Heart left ventricle (tissue), 16 donors: ENCODE measurements at regions of chr2 and their contacts with region 1.

Region 1: DNA sequence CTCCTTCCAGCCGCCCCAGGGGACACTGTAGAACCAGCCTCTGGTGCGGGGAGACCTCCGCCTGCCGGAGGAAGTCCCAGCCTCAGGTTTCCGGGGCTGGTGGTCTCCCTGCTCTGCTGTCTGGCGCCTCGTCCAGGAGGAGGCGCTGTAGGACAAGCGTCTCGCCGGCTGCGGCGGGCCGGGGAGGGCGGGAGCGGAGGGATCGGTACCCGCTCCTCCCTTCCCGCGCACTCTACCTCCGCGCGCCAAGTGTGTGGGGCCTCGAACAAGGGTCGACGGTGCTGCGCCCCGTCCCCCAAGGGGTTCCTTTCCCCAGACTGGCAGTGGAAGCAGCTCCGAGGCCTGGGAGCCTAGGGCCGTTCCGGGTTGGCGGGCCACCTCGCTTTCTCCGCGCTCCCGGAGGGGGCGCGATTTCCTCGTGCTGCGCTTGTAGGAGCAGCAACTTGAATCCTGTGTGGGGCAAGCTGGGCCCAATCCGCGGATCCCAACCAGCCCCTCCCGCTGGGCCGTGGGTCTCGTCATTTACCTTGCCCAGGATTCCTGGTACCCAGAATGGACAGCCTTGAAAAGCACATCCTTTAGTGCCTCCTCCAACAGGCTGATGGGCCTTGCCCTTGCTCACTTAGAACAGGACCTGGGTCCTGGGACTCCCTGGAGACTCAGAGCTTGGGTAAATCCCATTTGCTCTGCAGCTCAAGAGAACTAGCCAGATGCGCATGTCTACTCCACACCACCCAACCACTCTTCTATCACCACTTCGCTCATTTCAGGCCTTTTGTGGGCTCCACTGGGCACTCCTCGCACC is 10.6 kb upstream of the HOXD4 start:
- DNase-seq: peak; percentile 64 to 85 (median 70)
- ATAC-seq: peak; percentile 80 to 97 (median 94)
- H3K4me3 ChIP-seq: peak overlapping the region; percentile 1 to 69 (median 52)
- H3K27ac ChIP-seq: peak overlapping the region in 5 of 12 donors; percentile 32 to 68 (median 56)
- H3K4me1 ChIP-seq: peaks cover 0 to 30% (median 14%) of the 10 kb centered on the region in 12 donors
- H3K27me3 ChIP-seq: peaks cover 31 to 97% (median 66%) of the 10 kb centered on the region in 9 donors
- CTCF ChIP-seq: peak; percentile 68 to 98 (median 92)
- POLR2A ChIP-seq: no peak

Region 2: GRCh38 chr2:176178038-176178756 is 37.5 kb after region 1 on chr2:
- intact Hi-C with region 1: loop called in 1 of 10 experiments (anchors 5 kb)
- DNase-seq: peak in 1 of 5 donors; percentile 66
- ATAC-seq: peak in 3 of 4 donors; percentile 29 to 59 (median 48)
- H3K4me3 ChIP-seq: peak overlapping the region in 11 of 12 donors; percentile 5 to 54 (median 40)
- H3K27ac ChIP-seq: peak overlapping the region in 4 of 12 donors; percentile 8 to 83 (median 69)
- H3K4me1 ChIP-seq: peaks cover 0 to 19% (median 0%) of the 10 kb centered on the region in 12 donors
- H3K27me3 ChIP-seq: peaks cover 35 to 100% (median 70%) of the 10 kb centered on the region in 9 donors
- CTCF ChIP-seq: no peak
- POLR2A ChIP-seq: no peak

Region 3: GRCh38 chr2:176638167-176639015 is 497.7 kb after region 1 on chr2:
- intact Hi-C with region 1: loop called in 8 of 10 experiments (anchors 1 to 2 kb)
- DNase-seq: peak; percentile 48 to 74 (median 69)
- ATAC-seq: peak in 3 of 4 donors; percentile 79 to 95 (median 88)
- H3K4me3 ChIP-seq: peak overlapping the region; percentile 49 to 77 (median 60)
- H3K27ac ChIP-seq: peak overlapping the region in 6 of 12 donors; percentile 37 to 77 (median 58)
- H3K4me1 ChIP-seq: peaks cover 0 to 10% (median 4%) of the 10 kb centered on the region in 12 donors
- H3K27me3 ChIP-seq: peaks cover 10 to 96% (median 54%) of the 10 kb centered on the region in 9 donors
- CTCF ChIP-seq: peak; percentile 57 to 88 (median 78)
- POLR2A ChIP-seq: no peak

Region 4: GRCh38 chr2:176653479-176654443 is 513.0 kb after region 1 on chr2:
- intact Hi-C with region 1: loop called in 2 of 10 experiments (anchors 5 kb)
- DNase-seq: peak; percentile 27 to 68 (median 49)
- ATAC-seq: peak; percentile 58 to 93 (median 84)
- H3K4me3 ChIP-seq: no peak overlapping the region
- H3K27ac ChIP-seq: no peak overlapping the region
- H3K4me1 ChIP-seq: peaks cover 0 to 8% (median 0%) of the 10 kb centered on the region in 12 donors
- H3K27me3 ChIP-seq: peaks cover 0 to 29% (median 3%) of the 10 kb centered on the region in 9 donors
- CTCF ChIP-seq: peak; percentile 31 to 74 (median 62)
- POLR2A ChIP-seq: no peak

Region 5: DNA sequence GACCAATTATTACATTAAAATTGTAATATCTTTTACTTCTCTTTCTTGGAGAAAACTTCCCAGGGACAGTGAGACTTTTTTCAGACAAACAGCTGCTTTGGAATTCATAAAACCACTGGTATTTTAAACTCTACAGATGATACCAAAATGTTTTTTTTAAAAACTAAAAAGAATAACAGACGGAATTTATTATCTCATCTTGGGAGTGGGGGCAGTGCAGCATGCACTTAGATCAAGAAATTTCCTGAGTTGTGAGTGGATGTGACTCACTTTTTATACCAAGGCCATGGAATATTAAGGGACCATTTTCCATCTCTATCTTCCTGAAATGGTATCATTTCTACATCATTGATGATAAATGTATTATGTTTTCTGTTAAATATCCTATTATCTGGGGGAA is 649.0 kb after region 1 on chr2:
- intact Hi-C with region 1: no loop called
- DNase-seq: no peak
- ATAC-seq: peak in 2 of 4 donors; percentile 20 to 37
- H3K4me3 ChIP-seq: no peak overlapping the region
- H3K27ac ChIP-seq: peak overlapping the region in 3 of 12 donors; percentile 33 to 41 (median 38)
- H3K4me1 ChIP-seq: peaks cover 0 to 28% (median 0%) of the 10 kb centered on the region in 12 donors
- H3K27me3 ChIP-seq: no peaks in the 10 kb centered on the region
- CTCF ChIP-seq: no peak
- POLR2A ChIP-seq: no peak

Region 6: DNA sequence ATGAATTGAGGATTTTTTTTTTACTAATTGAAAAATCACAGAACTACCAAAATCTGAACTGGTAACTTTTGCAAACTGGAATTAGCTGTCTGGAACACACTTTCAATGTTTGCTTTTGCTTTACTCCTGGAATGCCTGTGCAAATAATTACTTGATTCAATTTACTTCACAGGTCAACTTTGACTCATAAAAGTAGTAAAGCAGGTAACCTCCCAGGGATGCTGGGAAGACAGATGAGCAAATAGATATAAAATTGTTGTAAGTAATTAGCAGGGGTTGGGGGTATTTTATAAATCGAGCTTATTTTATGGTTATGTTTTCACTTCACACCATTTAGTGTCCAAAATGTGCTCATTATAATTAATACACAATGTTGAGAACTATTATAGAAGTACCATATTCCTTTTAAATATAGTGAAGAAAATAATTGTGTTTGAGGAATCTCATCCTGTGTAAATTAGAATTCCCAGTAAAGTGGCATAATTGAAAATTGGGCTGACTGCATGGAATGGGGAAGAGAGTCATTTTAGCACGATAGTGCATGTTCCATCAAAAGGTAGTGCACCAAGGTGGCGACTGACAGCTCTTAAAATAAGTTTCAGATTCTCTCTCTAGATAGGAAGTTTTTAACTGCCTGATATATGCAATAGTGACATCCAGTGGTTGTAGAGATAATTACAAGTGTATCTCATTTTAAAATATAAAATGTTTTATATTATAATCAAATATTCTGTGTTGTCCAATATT is 673.8 kb after region 1 on chr2:
- intact Hi-C with region 1: loop called in 2 of 10 experiments (anchors 5 to 10 kb)
- DNase-seq: no peak
- ATAC-seq: no peak
- H3K4me3 ChIP-seq: no peak overlapping the region
- H3K27ac ChIP-seq: peak overlapping the region in 1 of 12 donors; percentile 9
- H3K4me1 ChIP-seq: peaks cover 0 to 20% (median 3%) of the 10 kb centered on the region in 12 donors
- H3K27me3 ChIP-seq: peaks cover 0 to 14% (median 0%) of the 10 kb centered on the region in 9 donors
- CTCF ChIP-seq: peak; percentile 60 to 79 (median 68)
- POLR2A ChIP-seq: no peak